ENCODE measurements at regions of chr6 and their contacts with region 1.

Region 1: GRCh38 chr6:35292517-35292941 is 5.1 kb upstream of the DEF6 start:
- DNase-seq: no peak
- H3K4me3 ChIP-seq: no peak overlapping the region
- H3K27ac ChIP-seq: no peak overlapping the region
- H3K4me1 ChIP-seq: peaks cover 7% of the 10 kb centered on the region
- H3K27me3 ChIP-seq: no peaks in the 10 kb centered on the region
- CTCF ChIP-seq: no peak
- POLR2A ChIP-seq: no peak

Region 2: GRCh38 chr6:35311390-35312075 is 19.0 kb after region 1 on chr6:
- intact Hi-C with region 1: loop called (anchors 1 kb)
- DNase-seq: peak; percentile 70 to 77
- H3K4me3 ChIP-seq: no peak overlapping the region
- H3K27ac ChIP-seq: no peak overlapping the region
- H3K4me1 ChIP-seq: no peaks in the 10 kb centered on the region
- H3K27me3 ChIP-seq: no peaks in the 10 kb centered on the region
- CTCF ChIP-seq: no peak
- POLR2A ChIP-seq: no peak

Measured in vagina (tissue), 2 donors.